BJ (cell line): ENCODE measurements at regions of chr17 and their contacts with region 1.

Region 1: GRCh38 chr17:31748881-31749280 is 110.2 kb downstream of the COPRS start:
- DNase-seq: no peak
- H3K4me3 ChIP-seq: no peak overlapping the region
- H3K27me3 ChIP-seq: no peaks in the 10 kb centered on the region
- CTCF ChIP-seq: no peak

Region 2: DNA sequence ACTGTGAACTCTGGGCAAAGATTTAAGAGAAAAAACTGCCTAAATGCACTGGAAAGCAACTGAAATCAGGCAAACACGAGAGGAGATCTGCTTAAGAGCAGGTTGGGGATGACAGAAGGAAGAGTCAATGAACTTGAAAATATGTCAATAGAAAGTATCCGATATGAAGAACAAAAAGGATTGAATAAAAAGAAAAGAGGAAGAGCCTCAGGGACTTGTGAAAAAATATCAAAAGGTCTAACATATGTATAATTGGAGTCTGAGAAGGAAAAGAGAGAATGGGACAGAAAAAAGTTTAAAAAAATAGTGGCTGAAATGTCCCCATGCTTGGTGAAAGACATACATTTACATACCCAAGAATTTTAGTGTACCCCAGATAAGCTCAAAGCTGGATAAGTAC is 85.3 kb before region 1 on chr17:
- CTCF ChIA-PET with region 1: no interaction called
- POLR2A ChIA-PET with region 1: no interaction called
- DNase-seq: no peak
- H3K4me3 ChIP-seq: no peak overlapping the region
- H3K27me3 ChIP-seq: no peaks in the 10 kb centered on the region
- CTCF ChIP-seq: no peak

Region 3: GRCh38 chr17:31724026-31724425 is 24.9 kb before region 1 on chr17:
- CTCF ChIA-PET with region 1: no interaction called
- POLR2A ChIA-PET with region 1: interaction called, 15 read pairs
- DNase-seq: no peak
- H3K4me3 ChIP-seq: no peak overlapping the region
- H3K27me3 ChIP-seq: no peaks in the 10 kb centered on the region
- CTCF ChIP-seq: no peak